Activated CD4-positive, alpha-beta T cell treated with anti-CD3 and anti-CD28 coated beads for 36 hours (primary cell): ENCODE measurements at regions of chr4 and their contacts with region 1.

Region 1: GRCh38 chr4:145097821-145098674 is at the starts of genes ABCE1 and ANAPC10:
- DNase-seq: peak; percentile 98
- ATAC-seq: peak; percentile 92
- H3K4me3 Mint-ChIP-seq: peak within 1 kb of the TSS; percentile 97
- H3K27ac Mint-ChIP-seq: peak within 1 kb of the TSS; percentile 99
- H3K4me1 Mint-ChIP-seq: peaks cover 22% of the 10 kb centered on the region
- H3K27me3 Mint-ChIP-seq: no peaks in the 10 kb centered on the region
- total RNA-seq, gene ABCE1: 148 to 172 TPM
- total RNA-seq, gene ANAPC10: 27.7 to 31.5 TPM

Region 2: DNA sequence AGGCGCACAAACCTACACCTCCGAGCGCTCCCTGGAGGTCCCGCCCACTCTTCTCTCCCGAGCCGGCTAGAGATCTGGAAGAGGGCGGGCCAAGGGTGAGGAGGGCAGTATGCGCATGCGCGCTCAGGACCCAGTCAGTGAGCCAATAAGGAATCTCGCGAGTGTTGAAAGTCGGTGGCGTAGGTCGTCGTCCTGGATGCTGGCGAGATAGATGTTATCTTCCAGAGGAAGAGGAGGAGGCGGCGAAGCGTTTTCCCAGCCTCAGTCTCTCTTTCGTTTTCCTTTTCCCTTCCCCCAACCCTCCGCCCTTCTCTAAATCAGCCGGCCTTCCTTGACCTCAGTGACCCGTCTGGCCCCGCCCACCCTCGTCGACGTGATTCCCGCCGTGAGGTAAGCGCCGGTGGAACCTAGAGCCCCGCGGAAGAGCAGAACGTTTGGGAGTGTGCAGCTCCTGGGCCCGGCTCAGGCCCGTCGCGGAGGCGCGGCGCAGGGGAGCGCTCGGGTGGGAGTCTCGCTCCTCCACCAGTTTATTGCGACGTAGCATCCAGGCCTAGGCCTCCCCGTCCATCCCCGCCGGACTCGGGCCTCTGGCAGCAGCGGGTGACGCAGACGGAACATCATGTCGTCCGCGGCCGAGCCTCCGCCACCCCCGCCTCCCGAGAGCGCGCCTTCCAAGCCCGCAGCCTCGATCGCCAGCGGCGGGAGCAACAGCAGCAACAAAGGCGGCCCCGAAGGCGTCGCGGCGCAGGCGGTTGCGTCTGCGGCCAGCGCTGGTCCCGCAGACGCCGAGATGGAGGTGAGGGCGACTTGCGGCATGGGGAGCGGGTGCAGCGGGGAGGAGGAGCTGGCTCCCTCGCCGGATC is 1584.5 kb before region 1 on chr4 and contains the start of gene SMARCA5:
- CTCF ChIA-PET with region 1: no interaction called
- POLR2A ChIA-PET with region 1: no interaction called
- intact Hi-C with region 1: loop called in 1 of 2 experiments (anchors 1 kb)
- DNase-seq: peak; percentile 97
- ATAC-seq: peak; percentile 85
- H3K4me3 Mint-ChIP-seq: peak within 1 kb of the TSS; percentile 100
- H3K27ac Mint-ChIP-seq: peak within 1 kb of the TSS; percentile 99
- H3K4me1 Mint-ChIP-seq: peaks cover 29% of the 10 kb centered on the region
- H3K27me3 Mint-ChIP-seq: no peaks in the 10 kb centered on the region
- total RNA-seq, gene SMARCA5: 66.6 to 69.8 TPM

Region 3: DNA sequence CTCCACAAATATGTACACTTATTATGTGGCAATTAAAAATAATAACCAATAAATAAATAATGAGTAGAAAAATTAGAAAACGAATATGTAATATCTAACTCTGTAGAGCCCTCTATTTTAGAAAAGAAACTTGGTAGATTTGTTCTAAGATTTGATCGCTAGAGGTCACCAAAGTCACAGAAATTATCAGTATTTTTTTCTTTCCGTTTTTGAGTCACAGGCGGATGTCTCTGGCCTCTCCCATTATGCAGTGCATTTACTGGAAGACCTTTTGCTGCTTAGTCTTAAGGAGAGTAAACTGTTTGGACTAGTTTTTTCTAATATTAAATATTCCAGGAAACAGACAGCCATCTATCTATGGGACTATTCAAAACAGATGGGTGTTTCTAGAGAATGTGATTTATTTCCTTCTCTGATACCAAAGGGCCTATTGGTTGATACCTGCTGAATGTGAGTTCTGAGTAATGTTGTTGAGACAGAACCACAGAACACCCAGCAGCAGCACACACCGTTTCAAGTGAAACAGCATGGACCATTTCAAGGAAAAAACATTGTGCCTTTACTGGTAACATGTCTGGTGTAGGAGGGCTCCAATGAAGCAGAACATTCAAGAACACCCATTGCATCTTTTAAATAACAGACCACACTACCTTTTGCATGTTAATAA is 923.5 kb before region 1 on chr4:
- CTCF ChIA-PET with region 1: interaction called, 4 read pairs
- POLR2A ChIA-PET with region 1: no interaction called
- intact Hi-C with region 1: loop called in 1 of 2 experiments (anchors 1 kb)
- DNase-seq: peak; percentile 42
- ATAC-seq: peak; percentile 84
- H3K4me3 Mint-ChIP-seq: no peak overlapping the region
- H3K27ac Mint-ChIP-seq: peak overlapping the region; percentile 72
- H3K4me1 Mint-ChIP-seq: peaks cover 17% of the 10 kb centered on the region
- H3K27me3 Mint-ChIP-seq: peaks cover 3% of the 10 kb centered on the region

Region 4: GRCh38 chr4:145132511-145133098 is 34.6 kb after region 1 on chr4:
- CTCF ChIA-PET with region 1: no interaction called
- POLR2A ChIA-PET with region 1: interaction called, 3 read pairs
- intact Hi-C with region 1: loop called in 1 of 2 experiments (anchors 2 kb)
- DNase-seq: peak; percentile 48
- ATAC-seq: peak; percentile 63
- H3K4me3 Mint-ChIP-seq: no peak overlapping the region
- H3K27ac Mint-ChIP-seq: peak overlapping the region; percentile 68
- H3K4me1 Mint-ChIP-seq: peaks cover 45% of the 10 kb centered on the region
- H3K27me3 Mint-ChIP-seq: no peaks in the 10 kb centered on the region

Region 5: GRCh38 chr4:145487631-145488030 is 389.6 kb after region 1 on chr4:
- CTCF ChIA-PET with region 1: no interaction called
- POLR2A ChIA-PET with region 1: no interaction called
- intact Hi-C with region 1: loop called in 1 of 2 experiments (anchors 1 kb)
- DNase-seq: peak; percentile 62
- ATAC-seq: peak; percentile 93
- H3K4me3 Mint-ChIP-seq: no peak overlapping the region
- H3K27ac Mint-ChIP-seq: no peak overlapping the region
- H3K4me1 Mint-ChIP-seq: peaks cover 20% of the 10 kb centered on the region
- H3K27me3 Mint-ChIP-seq: peaks cover 5% of the 10 kb centered on the region

Region 6: DNA sequence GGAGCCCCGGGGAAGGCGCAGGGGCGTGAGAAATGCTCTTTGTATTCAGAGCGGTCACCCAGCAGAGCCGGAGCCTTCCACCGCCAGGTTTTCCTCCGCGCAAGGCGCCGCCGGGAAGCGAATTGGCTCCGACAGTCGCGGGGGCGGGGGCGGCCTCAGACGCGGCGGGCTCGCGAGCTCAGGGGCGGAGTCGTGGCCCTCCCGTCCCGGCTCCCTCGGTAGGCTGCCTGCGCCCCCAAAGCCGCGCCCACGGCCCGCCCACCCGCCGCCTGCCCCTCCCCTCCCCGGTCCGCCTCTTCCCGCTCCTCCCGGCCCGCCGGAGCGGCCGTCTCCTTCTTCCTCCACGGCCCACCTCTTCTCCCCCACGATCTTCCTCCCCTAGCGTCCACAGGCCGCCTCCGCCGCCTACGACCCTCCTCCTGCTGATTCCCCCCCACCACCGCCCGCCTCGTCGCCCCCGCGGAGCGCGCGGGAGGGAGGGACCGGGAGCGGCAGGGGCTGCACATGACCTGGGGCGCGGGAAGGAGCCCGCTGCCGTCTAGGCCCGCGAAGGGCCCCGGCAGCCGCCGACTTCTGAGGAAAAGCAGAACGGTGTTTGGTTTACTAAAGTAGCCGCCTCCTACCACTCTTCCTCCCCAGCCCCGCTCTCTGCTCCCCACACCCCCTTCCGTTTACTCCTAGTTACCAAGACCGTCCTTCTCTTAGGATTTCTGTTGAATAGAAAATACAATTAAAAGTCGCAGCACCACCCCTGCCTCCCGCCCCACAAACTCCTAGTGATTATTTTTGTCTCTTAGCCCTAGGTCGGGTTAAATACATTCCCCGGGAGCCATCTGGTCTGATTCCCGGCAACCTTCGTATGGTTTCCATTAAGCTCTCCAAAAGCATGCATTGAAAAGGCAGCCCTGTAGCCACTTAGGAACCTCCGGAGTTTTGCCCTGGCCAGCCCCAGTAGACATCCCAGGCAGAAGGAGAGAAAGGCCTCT is 635.1 kb after region 1 on chr4:
- CTCF ChIA-PET with region 1: no interaction called
- POLR2A ChIA-PET with region 1: no interaction called
- intact Hi-C with region 1: loop called in 1 of 2 experiments (anchors 2 kb)
- DNase-seq: peak; percentile 92
- ATAC-seq: peak; percentile 92
- H3K4me3 Mint-ChIP-seq: peak overlapping the region; percentile 65
- H3K27ac Mint-ChIP-seq: peak overlapping the region; percentile 56
- H3K4me1 Mint-ChIP-seq: peaks cover 23% of the 10 kb centered on the region
- H3K27me3 Mint-ChIP-seq: no peaks in the 10 kb centered on the region

Region 7: GRCh38 chr4:146522098-146522868 is 1424.2 kb after region 1 on chr4:
- CTCF ChIA-PET with region 1: no interaction called
- POLR2A ChIA-PET with region 1: no interaction called
- intact Hi-C with region 1: loop called in 1 of 2 experiments (anchors 5 kb)
- DNase-seq: peak; percentile 91
- ATAC-seq: peak; percentile 77
- H3K4me3 Mint-ChIP-seq: no peak overlapping the region
- H3K27ac Mint-ChIP-seq: no peak overlapping the region
- H3K4me1 Mint-ChIP-seq: peaks cover 27% of the 10 kb centered on the region
- H3K27me3 Mint-ChIP-seq: no peaks in the 10 kb centered on the region